Endothelial cell of umbilical vein (primary cell): ENCODE measurements at regions of chr10 and their contacts with region 1.

Region 1: DNA sequence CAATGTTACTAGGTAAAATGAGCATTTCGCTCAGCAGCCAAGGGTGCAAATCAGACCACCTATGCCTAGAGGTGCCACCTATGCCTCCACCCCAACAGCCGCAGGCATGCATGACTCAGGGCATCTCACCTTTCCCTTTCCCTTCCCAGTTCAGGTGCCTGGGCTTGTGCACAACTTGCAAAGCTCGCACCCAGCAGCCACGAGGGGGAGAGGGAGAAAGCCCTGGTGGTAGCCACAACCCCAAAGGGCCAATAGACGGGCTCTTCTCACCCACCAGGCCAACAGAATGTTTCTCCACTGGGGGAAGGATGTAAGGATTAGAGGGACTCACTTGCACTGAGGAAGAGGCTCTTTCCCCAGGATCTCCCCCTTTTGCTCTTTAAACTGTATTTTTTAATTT is 462.3 kb upstream of the PCDH15 start:
- DNase-seq: no peak
- H3K4me3 ChIP-seq: no peak overlapping the region
- H3K27ac ChIP-seq: no peak overlapping the region
- H3K4me1 ChIP-seq: no peaks in the 10 kb centered on the region
- H3K27me3 ChIP-seq: peaks cover 0 to 2% of the 10 kb centered on the region in 2 experiments
- CTCF ChIP-seq: no peak
- POLR2A ChIP-seq: no peak

Region 2: DNA sequence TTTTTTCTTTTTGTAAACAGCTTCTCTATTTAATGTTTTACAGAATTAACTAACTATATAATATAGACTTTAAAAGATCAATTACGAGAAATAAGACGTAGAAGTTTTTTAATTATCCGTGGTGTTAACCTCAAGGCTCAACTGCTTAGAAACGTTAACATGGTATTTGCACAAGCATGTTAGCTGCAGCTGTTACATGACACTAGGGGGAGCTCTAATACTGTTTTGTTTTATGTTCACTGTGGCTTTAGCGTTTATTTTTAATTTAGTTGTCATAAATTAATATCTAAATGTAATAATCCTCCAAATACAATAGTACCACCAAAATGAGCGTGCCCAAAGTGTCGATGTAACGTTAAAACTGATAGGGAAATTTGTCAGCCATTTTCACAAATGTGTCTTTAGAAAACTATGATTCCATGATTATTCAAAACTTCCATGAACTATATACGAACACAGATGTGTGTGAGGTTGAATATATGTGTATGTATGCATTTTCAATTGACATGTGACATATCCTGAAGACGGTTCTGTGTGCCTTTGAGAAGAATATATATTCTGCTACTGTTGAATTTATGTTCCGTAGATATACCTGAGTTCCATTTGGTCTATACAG is 1662.0 kb before region 1 on chr10:
- CTCF ChIA-PET with region 1: interaction called, 10 read pairs
- POLR2A ChIA-PET with region 1: no interaction called
- dilution Hi-C with region 1: no loop called
- intact Hi-C with region 1: loop called (anchors 1 kb)
- DNase-seq: peak; percentile 52
- H3K4me3 ChIP-seq: no peak overlapping the region
- H3K27ac ChIP-seq: no peak overlapping the region
- H3K4me1 ChIP-seq: no peaks in the 10 kb centered on the region
- H3K27me3 ChIP-seq: peaks cover 2 to 9% of the 10 kb centered on the region in 2 experiments
- CTCF ChIP-seq: peak; percentile 67 to 75
- POLR2A ChIP-seq: no peak

Region 3: GRCh38 chr10:54133203-54133602 is 1130.1 kb before region 1 on chr10:
- CTCF ChIA-PET with region 1: interaction called, 33 read pairs
- POLR2A ChIA-PET with region 1: no interaction called
- dilution Hi-C with region 1: no loop called
- intact Hi-C with region 1: loop called (anchors 1 kb)
- DNase-seq: peak; percentile 22
- H3K4me3 ChIP-seq: no peak overlapping the region
- H3K27ac ChIP-seq: no peak overlapping the region
- H3K4me1 ChIP-seq: no peaks in the 10 kb centered on the region
- H3K27me3 ChIP-seq: no peaks in the 10 kb centered on the region
- CTCF ChIP-seq: peak; percentile 22 to 35
- POLR2A ChIP-seq: no peak

Region 4: GRCh38 chr10:54985732-54986131 is 277.6 kb before region 1 on chr10:
- CTCF ChIA-PET with region 1: no interaction called
- POLR2A ChIA-PET with region 1: no interaction called
- dilution Hi-C with region 1: no loop called
- intact Hi-C with region 1: loop called (anchors 2 kb)
- DNase-seq: peak; percentile 21
- H3K4me3 ChIP-seq: no peak overlapping the region
- H3K27ac ChIP-seq: no peak overlapping the region
- H3K4me1 ChIP-seq: no peaks in the 10 kb centered on the region
- H3K27me3 ChIP-seq: no peaks in the 10 kb centered on the region
- CTCF ChIP-seq: peak; percentile 24 to 27
- POLR2A ChIP-seq: no peak

Region 5: DNA sequence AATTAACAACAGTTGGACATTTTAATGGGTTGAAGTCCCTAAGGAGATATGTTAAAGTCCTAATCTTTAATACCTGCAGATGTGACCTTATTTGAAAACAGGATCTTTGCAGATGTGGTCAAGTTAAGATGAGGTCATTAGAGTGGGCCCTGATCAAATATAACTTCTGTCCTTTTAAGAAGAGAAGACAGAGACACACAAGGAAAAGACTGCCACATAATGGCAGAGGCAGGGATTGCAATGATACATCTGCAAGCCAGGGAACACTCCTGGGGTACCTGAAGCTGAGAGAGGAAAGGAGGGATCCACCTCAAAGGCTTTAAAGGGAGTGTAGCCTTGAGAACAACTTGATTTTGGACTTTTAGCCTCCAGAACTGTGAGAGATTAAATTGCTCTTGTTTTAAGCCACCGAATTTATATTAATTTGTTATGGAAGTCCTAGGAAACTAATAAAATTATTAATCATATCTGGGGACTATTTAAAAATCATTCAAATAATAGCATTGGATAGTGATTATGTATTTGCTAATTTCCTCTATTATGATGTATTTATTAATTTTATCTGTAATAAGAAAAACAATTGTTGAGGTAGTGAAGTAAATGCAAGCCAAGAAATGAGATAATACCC is 237.7 kb after region 1 on chr10:
- CTCF ChIA-PET with region 1: no interaction called
- POLR2A ChIA-PET with region 1: no interaction called
- dilution Hi-C with region 1: no loop called
- intact Hi-C with region 1: loop called (anchors 1 kb)
- DNase-seq: peak; percentile 57
- H3K4me3 ChIP-seq: no peak overlapping the region
- H3K27ac ChIP-seq: no peak overlapping the region
- H3K4me1 ChIP-seq: no peaks in the 10 kb centered on the region
- H3K27me3 ChIP-seq: no peaks in the 10 kb centered on the region
- CTCF ChIP-seq: peak; percentile 58 to 64
- POLR2A ChIP-seq: no peak